Sciatic nerve (tissue), 2 donors: ENCODE measurements at regions of chr14 and their contacts with region 1.

Region 1: GRCh38 chr14:61719344-61720293 is 24.3 kb downstream of the HIF1A start:
- DNase-seq: no peak
- ATAC-seq: no peak

Region 2: GRCh38 chr14:61388173-61388975 is 331.2 kb before region 1 on chr14:
- intact Hi-C with region 1: no loop called
- DNase-seq: no peak
- ATAC-seq: peak; percentile 57

Region 3: GRCh38 chr14:61461808-61462275 is 257.8 kb before region 1 on chr14:
- intact Hi-C with region 1: loop called (anchors 10 kb)
- DNase-seq: no peak
- ATAC-seq: peak; percentile 73

Region 4: GRCh38 chr14:61736751-61737150 is 17.1 kb after region 1 on chr14:
- intact Hi-C with region 1: no loop called
- DNase-seq: no peak
- ATAC-seq: no peak